ENCODE measurements at regions of chr21 and their contacts with region 1.

Region 1: GRCh38 chr21:42781150-42781970 is 98.0 kb downstream of the WDR4 start:
- DNase-seq: no peak
- H3K4me3 Mint-ChIP-seq: no peak overlapping the region
- H3K27ac Mint-ChIP-seq: no peak overlapping the region
- H3K4me1 Mint-ChIP-seq: peaks cover 39% of the 10 kb centered on the region
- H3K27me3 Mint-ChIP-seq: peaks cover 30% of the 10 kb centered on the region

Region 2: DNA sequence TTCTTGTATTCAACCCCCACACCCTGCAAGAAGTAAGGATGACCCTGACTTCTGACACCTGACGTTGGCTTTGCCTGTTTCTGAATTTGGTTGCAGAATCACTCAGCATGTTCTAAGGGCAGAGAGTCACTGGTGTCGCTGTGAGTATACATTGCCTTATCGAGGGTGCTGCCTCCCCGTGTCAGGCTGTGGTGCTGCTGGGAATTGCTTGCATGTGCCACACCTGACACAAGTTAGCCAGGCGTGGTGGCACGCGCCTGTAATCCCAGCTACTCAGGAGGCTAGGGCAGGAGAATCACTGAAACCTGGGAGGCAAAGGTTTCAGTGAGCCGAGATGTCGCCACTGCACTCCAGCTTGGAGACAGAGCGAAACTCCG is 52.1 kb after region 1 on chr21:
- intact Hi-C with region 1: loop called (anchors 5 kb)
- DNase-seq: peak; percentile 40
- H3K4me3 Mint-ChIP-seq: peak overlapping the region; percentile 71
- H3K27ac Mint-ChIP-seq: peak overlapping the region; percentile 59
- H3K4me1 Mint-ChIP-seq: peaks cover 23% of the 10 kb centered on the region
- H3K27me3 Mint-ChIP-seq: peaks cover 7% of the 10 kb centered on the region